PC-3 (cell line): ENCODE measurements at regions of chr9 and their contacts with region 1.

Region 1: DNA sequence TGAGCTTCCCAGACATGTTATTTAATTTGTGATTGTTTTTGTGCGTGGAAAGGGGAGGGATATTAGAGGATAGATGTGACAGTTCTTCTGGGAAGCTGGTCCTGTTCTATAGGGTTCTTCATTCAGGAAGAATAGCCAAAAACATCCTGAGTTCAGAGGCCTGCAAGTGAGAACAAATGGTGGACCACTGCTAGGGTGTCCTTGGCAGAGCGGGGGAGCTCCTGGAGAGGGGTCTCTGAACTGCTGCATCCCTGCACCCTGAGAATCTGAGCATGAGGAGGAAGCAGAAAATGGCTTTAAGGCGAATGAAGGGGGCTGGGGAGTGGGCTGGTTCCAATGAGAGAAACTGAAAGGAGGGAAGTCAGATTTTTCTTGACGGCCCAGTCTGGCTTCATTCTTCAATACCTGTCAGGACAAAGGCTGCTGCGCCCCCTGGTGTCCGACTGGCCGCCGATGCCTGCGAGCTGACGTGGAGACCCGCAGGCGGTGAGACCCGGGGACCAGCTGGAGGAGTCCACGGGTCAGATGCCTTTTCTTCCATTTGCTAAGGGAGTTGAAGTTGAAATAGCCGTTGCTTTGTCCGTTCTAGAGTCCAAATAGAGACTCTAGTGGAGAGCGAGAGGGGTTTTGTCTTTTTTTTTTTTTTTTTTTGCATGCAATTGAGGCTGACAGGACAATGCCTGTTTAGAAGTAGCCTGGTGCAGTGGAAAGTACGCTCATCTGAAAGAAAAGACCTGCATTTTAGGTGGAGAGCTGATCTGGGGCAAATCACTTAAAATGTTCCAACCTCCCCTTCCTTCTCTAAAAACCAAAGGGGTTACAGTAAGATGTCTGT is 39.5 kb upstream of the NFIB start:
- DNase-seq: peak; percentile 82
- ATAC-seq: peak; percentile 89
- H3K4me3 ChIP-seq: peak overlapping the region; percentile 55
- H3K27ac ChIP-seq: no peak overlapping the region
- H3K4me1 ChIP-seq: 0 out of 2 replicates have a peak, but pooled peaks cover 3% of the 10 kb centered on the region
- H3K27me3 ChIP-seq: no peaks in the 10 kb centered on the region
- CTCF ChIP-seq: peak; percentile 87

Region 2: GRCh38 chr9:13446938-13447842 is 906.2 kb before region 1 on chr9:
- CTCF ChIA-PET with region 1: no interaction called
- POLR2A ChIA-PET with region 1: no interaction called
- intact Hi-C with region 1: loop called (anchors 5 kb)
- DNase-seq: no peak
- ATAC-seq: no peak
- H3K4me3 ChIP-seq: no peak overlapping the region
- H3K27ac ChIP-seq: no peak overlapping the region
- H3K4me1 ChIP-seq: no peaks in the 10 kb centered on the region
- H3K27me3 ChIP-seq: no peaks in the 10 kb centered on the region
- CTCF ChIP-seq: no peak; the same call in 1 of the 2 replicates

Region 3: DNA sequence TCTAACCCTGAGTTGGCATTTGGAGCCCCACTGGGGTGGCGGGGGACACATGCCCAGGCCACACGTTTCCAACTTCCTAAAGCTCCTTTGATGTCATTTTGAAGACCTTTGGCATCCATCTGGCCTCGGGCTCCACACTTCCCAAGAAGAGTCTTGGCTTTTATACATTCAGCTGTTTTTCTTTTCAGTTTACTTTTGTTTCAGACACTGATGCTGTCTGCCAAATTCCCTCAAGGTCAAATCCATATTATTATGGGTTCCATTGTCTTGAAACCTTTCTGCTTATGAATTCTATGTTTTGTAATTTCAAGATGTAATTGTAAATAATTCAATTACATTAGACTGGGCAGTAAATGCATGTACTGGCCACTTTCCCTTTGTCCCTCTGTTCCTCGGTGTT is 15.8 kb before region 1 on chr9:
- CTCF ChIA-PET with region 1: no interaction called
- POLR2A ChIA-PET with region 1: no interaction called
- intact Hi-C with region 1: no loop called
- DNase-seq: no peak
- ATAC-seq: no peak
- H3K4me3 ChIP-seq: no peak overlapping the region
- H3K27ac ChIP-seq: no peak overlapping the region
- H3K4me1 ChIP-seq: no peaks in the 10 kb centered on the region
- H3K27me3 ChIP-seq: no peaks in the 10 kb centered on the region
- CTCF ChIP-seq: no peak

Region 4: DNA sequence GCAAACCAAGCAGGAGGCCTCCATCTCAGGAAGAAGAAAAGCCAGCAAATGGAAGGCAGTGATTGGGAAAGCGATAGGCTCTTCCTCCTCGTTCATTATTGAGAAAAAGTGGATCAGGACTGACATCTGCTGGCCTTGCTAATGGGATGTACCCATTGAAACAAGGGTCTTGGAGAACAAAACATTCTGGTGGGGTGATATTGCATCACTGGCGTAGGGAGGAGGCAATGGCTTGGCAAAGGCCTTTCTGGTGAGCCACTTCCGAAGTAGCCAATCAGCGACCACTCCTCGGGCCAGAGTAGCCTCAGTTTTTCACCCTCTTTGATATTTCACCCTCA is 47.2 kb after region 1 on chr9:
- CTCF ChIA-PET with region 1: interaction called, 17 read pairs
- POLR2A ChIA-PET with region 1: no interaction called
- intact Hi-C with region 1: loop called (anchors 5 kb)
- DNase-seq: peak; percentile 78
- ATAC-seq: peak; percentile 91
- H3K4me3 ChIP-seq: peak overlapping the region; percentile 58
- H3K27ac ChIP-seq: peak overlapping the region; percentile 23; the same call in 1 of the 2 replicates
- H3K4me1 ChIP-seq: peaks cover 20% of the 10 kb centered on the region
- H3K27me3 ChIP-seq: no peaks in the 10 kb centered on the region
- CTCF ChIP-seq: peak; percentile 70

Region 5: GRCh38 chr9:14428781-14429230 is 75.4 kb after region 1 on chr9:
- CTCF ChIA-PET with region 1: interaction called, 4 read pairs
- POLR2A ChIA-PET with region 1: interaction called, 22 read pairs
- intact Hi-C with region 1: no loop called
- DNase-seq: peak; percentile 73
- ATAC-seq: peak; percentile 63
- H3K4me3 ChIP-seq: no peak overlapping the region
- H3K27ac ChIP-seq: no peak overlapping the region
- H3K4me1 ChIP-seq: peaks cover 19% of the 10 kb centered on the region
- H3K27me3 ChIP-seq: no peaks in the 10 kb centered on the region
- CTCF ChIP-seq: peak; percentile 77

Region 6: GRCh38 chr9:14441976-14442651 is 88.7 kb after region 1 on chr9:
- CTCF ChIA-PET with region 1: no interaction called
- POLR2A ChIA-PET with region 1: no interaction called
- intact Hi-C with region 1: no loop called
- DNase-seq: peak; percentile 17
- ATAC-seq: no peak
- H3K4me3 ChIP-seq: no peak overlapping the region
- H3K27ac ChIP-seq: no peak overlapping the region
- H3K4me1 ChIP-seq: no peaks in the 10 kb centered on the region
- H3K27me3 ChIP-seq: no peaks in the 10 kb centered on the region
- CTCF ChIP-seq: peak; percentile 48